Naive thymus-derived CD4-positive, alpha-beta T cell (primary cell): ENCODE measurements at regions of chr9 and their contacts with region 1.

Region 1: DNA sequence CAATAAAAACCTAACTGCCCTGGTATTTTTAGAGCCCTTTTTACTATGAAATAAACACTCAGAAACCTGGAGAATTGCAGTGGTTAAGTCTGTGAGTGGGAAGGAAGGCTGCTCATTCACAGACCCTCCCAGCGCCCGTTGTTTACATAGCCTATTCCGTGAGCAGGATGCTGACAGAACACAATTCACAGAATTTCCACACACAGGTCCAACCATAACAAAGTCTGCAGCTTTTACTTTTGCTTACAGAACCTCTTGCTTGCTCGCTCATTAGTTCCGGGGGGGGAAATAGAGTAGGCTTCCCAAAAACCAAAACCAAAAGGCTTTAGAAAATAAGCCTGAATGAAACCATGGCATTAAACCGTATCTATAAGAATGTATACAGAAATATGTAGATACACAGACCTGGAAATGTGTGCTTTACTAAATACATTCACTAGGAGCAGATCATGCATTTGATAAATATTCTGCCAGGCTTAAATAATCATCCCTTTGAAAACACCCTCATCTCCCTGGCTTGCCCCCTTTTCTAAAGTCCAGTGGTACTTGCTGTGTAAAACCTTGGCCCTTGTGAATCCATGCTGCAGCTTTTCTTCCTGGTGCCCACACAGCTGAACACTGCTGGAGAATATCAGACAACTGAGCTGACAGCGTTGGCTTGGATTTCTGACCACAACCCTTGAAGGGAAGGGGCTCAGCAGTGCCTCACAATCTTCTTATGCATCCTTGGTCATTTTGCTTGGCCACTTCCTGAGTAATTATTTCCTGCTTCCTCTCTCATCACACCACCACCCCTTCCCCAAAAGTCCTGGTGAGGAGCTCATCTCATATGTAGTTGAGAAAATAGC is 128.0 kb downstream of the FANCC start:
- DNase-seq: peak in 2 of 9 donors; percentile 5 to 42
- ATAC-seq: peak; percentile 32
- H3K4me3 ChIP-seq: no peak overlapping the region
- H3K4me3 Mint-ChIP-seq: peak overlapping the region in 9 of 10 donors; percentile 7 to 77 (median 55)
- H3K27ac ChIP-seq: no peak overlapping the region
- H3K27ac Mint-ChIP-seq: peak overlapping the region in 8 of 9 donors; percentile 26 to 89 (median 63)
- H3K4me1 ChIP-seq: no peaks in the 10 kb centered on the region
- H3K4me1 Mint-ChIP-seq: peaks cover 24 to 47% (median 30%) of the 10 kb centered on the region in 7 donors
- H3K27me3 ChIP-seq: no peaks in the 10 kb centered on the region
- H3K27me3 Mint-ChIP-seq: no peaks in the 10 kb centered on the region

Region 2: DNA sequence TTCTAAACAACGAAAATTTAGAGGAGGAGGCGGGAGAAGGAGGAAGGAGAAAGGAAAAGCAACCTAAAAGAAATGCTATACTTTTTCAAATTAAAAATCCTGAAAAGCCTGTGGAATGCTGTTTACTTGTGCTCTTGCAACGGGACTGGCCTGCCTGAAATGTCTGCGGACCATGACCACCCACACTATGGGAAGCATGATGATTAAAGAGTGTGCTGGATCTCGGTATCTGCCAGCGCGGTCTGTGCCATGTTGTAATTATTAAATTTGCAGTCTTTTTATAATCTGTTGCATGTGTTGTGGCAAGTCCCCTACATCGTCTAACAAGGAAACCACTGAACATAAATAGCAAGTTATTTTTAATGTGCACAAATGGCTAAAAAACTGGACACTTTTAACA is 16.7 kb after region 1 on chr9:
- CTCF ChIA-PET with region 1: no interaction called
- POLR2A ChIA-PET with region 1: no interaction called
- intact Hi-C with region 1: no loop called
- DNase-seq: no peak
- ATAC-seq: no peak
- H3K4me3 ChIP-seq: no peak overlapping the region
- H3K4me3 Mint-ChIP-seq: no peak overlapping the region
- H3K27ac ChIP-seq: no peak overlapping the region
- H3K27ac Mint-ChIP-seq: no peak overlapping the region
- H3K4me1 ChIP-seq: no peaks in the 10 kb centered on the region
- H3K4me1 Mint-ChIP-seq: peaks cover 0 to 5% (median 0%) of the 10 kb centered on the region in 7 donors
- H3K27me3 ChIP-seq: no peaks in the 10 kb centered on the region
- H3K27me3 Mint-ChIP-seq: peaks cover 0 to 3% (median 0%) of the 10 kb centered on the region in 5 donors

Region 3: DNA sequence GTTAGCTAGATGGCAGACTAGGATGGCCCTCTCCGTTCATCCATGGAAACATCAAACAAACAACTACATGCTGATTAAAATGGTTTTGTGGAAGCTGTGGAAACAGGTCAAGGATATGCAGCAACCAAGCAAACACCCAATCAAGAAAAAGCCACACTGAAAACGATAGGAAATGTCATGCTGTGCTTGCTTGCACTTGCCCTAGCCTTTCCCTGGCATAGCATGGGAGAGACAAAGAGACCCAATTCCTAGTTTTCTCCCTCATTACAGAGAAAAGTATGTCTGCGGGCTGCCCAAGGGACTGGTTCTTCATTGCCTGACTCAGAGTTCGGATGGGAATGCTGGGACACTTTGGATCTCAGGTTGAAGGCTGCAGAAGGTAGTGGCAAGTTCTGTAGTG is 29.3 kb after region 1 on chr9:
- CTCF ChIA-PET with region 1: no interaction called
- POLR2A ChIA-PET with region 1: no interaction called
- intact Hi-C with region 1: no loop called
- DNase-seq: no peak
- ATAC-seq: no peak
- H3K4me3 ChIP-seq: no peak overlapping the region
- H3K4me3 Mint-ChIP-seq: no peak overlapping the region
- H3K27ac ChIP-seq: no peak overlapping the region
- H3K27ac Mint-ChIP-seq: no peak overlapping the region
- H3K4me1 ChIP-seq: peaks cover 0 to 6% of the 10 kb centered on the region in 2 donors
- H3K4me1 Mint-ChIP-seq: peaks cover 0 to 18% (median 11%) of the 10 kb centered on the region in 7 donors
- H3K27me3 ChIP-seq: no peaks in the 10 kb centered on the region
- H3K27me3 Mint-ChIP-seq: no peaks in the 10 kb centered on the region

Region 4: DNA sequence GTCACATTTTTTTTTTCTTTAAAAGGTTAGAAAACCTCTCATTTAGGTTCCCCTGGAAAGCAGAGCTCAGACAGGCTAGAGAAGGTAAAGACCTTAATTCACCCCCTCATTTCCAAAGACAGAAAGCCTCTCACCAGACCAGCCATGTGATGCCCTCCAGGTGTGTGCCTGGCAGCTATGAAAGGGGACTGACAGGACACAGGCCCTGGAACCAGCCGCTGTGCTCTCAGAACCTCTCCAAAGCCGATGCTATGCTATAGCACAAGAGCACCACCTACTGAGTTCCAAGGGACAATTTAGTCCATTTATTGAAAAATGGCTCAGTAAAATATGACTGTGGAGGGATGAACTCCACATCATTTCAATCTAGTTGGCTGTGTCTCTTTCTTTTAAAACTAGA is 79.2 kb after region 1 on chr9:
- CTCF ChIA-PET with region 1: no interaction called
- POLR2A ChIA-PET with region 1: no interaction called
- intact Hi-C with region 1: loop called in 1 of 2 experiments (anchors 5 kb)
- DNase-seq: no peak
- ATAC-seq: no peak
- H3K4me3 ChIP-seq: no peak overlapping the region
- H3K4me3 Mint-ChIP-seq: no peak overlapping the region
- H3K27ac ChIP-seq: no peak overlapping the region
- H3K27ac Mint-ChIP-seq: peak overlapping the region in 2 of 9 donors; percentile 12 to 32
- H3K4me1 ChIP-seq: peaks cover 0 to 4% of the 10 kb centered on the region in 2 donors
- H3K4me1 Mint-ChIP-seq: peaks cover 9 to 49% (median 27%) of the 10 kb centered on the region in 7 donors
- H3K27me3 ChIP-seq: no peaks in the 10 kb centered on the region
- H3K27me3 Mint-ChIP-seq: no peaks in the 10 kb centered on the region

Region 5: GRCh38 chr9:95317119-95317892 is 127.8 kb after region 1 on chr9 and contains the start of gene FANCC:
- CTCF ChIA-PET with region 1: no interaction called
- POLR2A ChIA-PET with region 1: no interaction called
- intact Hi-C with region 1: loop called in 1 of 2 experiments (anchors 1 kb)
- DNase-seq: peak; percentile 74 to 89 (median 81)
- ATAC-seq: peak; percentile 94
- H3K4me3 ChIP-seq: peak within 1 kb of the TSS; percentile 85
- H3K4me3 Mint-ChIP-seq: peak within 1 kb of the TSS; percentile 78 to 95 (median 92)
- H3K27ac ChIP-seq: peak within 1 kb of the TSS; percentile 91
- H3K27ac Mint-ChIP-seq: peak within 1 kb of the TSS; percentile 75 to 95 (median 89)
- H3K4me1 ChIP-seq: peaks cover 3 to 7% of the 10 kb centered on the region in 2 donors
- H3K4me1 Mint-ChIP-seq: peaks cover 8 to 33% (median 23%) of the 10 kb centered on the region in 7 donors
- H3K27me3 ChIP-seq: no peaks in the 10 kb centered on the region
- H3K27me3 Mint-ChIP-seq: peaks cover 0 to 26% (median 0%) of the 10 kb centered on the region in 5 donors
- total RNA-seq, gene FANCC: 5.7 to 14.6 (median 7.9) TPM